ENCODE measurements at regions of chr20 and their contacts with region 1.

Region 1: DNA sequence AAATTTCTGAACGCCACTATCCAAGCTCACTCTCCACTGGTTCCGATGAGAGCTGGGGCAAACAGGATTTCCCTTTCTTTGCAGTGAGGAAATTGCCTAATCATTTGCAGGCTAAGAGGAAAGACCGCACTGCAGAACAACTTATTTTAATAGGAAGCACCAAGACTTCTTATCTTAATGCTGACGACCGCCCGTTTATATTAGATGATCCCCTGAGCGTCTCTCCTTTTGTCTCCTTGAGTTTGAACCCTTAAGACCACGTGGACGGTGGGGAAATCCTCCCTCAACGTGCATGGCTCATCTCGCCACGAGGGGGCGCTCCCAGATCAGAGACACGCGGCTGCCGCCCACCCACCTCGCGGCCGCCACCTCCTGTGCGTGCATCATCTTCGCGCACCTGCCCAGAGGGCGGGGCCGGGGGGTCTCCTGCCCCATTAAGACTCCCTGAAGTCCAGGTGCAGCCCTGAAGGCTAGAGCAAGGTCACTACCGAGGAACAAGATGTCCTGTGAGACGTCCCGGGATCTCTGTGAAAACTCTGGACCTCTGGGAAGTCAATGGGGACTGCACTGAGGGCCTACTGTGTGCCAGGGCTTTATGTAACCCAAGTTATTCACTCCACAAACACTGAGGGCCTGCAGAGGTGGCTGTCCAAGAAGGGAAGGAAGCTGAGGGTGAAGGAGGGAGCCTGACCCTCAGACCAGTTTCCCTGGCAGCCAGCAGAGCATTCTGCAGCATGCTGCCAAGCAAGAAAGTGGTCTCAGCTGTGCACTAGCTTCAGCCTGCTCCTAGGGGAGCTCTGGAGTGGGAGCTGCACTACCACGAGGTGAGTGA is 28.1 kb downstream of the PDYN start:
- DNase-seq: peak; percentile 89
- H3K4me3 Mint-ChIP-seq: peak overlapping the region; percentile 54
- H3K27ac Mint-ChIP-seq: peak overlapping the region; percentile 43
- H3K4me1 Mint-ChIP-seq: peaks cover 14% of the 10 kb centered on the region
- H3K27me3 Mint-ChIP-seq: peaks cover 23% of the 10 kb centered on the region

Region 2: DNA sequence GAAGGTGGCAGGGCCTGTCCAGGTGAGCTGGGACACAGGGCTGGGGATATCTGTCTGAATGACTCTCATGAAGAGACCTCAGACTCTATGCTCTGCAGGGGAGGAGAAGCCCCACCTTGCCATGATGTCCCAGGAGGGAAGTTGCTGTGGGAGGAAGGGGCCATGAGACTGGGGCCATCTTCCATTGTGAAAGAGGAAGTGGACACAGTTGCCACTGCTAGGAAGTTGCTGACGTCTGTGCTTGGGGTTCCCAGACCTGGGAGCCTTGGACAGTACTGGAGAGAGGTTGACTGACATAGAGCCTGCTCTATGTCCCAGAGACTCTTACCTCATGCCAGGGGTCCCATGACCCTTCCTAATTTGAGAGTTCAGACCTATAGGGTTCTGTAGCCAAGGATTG is 370.4 kb before region 1 on chr20:
- CTCF ChIA-PET with region 1: no interaction called
- intact Hi-C with region 1: no loop called
- DNase-seq: no peak
- H3K4me3 Mint-ChIP-seq: no peak overlapping the region
- H3K27ac Mint-ChIP-seq: no peak overlapping the region
- H3K4me1 Mint-ChIP-seq: peaks cover 3% of the 10 kb centered on the region
- H3K27me3 Mint-ChIP-seq: no peaks in the 10 kb centered on the region

Region 3: DNA sequence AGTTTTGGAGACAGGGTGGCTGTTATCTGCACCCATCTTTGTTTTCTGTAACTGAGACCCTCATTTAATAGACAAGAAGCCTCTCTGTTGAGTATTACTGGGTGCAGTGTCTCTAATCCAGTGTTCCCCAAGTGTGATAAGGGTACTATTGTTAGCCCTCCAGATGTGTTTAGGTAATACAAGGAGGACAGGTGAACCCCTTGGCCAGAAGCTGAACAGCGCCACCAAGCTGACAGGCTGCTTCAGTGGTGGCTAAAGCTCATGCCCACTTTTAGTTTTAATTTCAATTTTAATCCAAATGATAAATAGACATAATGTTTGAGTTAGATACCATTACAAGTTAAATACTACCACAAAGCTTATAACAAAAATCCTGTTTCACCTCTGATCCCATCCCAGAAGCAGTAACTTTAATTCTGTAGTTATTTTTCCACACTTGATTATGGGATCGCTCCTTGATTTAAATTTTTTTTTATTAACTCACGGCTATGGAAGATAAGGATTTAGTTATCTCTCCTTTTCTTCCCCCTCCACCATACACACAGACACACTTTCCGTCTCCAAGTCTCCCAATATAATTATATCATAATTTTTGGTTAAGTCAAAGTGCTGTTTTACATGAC is 127.5 kb after region 1 on chr20:
- CTCF ChIA-PET with region 1: no interaction called
- intact Hi-C with region 1: loop called (anchors 1 kb)
- DNase-seq: peak; percentile 65
- H3K4me3 Mint-ChIP-seq: no peak overlapping the region
- H3K27ac Mint-ChIP-seq: no peak overlapping the region
- H3K4me1 Mint-ChIP-seq: no peaks in the 10 kb centered on the region
- H3K27me3 Mint-ChIP-seq: peaks cover 28% of the 10 kb centered on the region

Region 4: GRCh38 chr20:2349818-2350508 is 384.2 kb after region 1 on chr20:
- CTCF ChIA-PET with region 1: no interaction called
- intact Hi-C with region 1: loop called (anchors 2 kb)
- DNase-seq: no peak
- H3K4me3 Mint-ChIP-seq: no peak overlapping the region
- H3K27ac Mint-ChIP-seq: no peak overlapping the region
- H3K4me1 Mint-ChIP-seq: no peaks in the 10 kb centered on the region
- H3K27me3 Mint-ChIP-seq: peaks cover 13% of the 10 kb centered on the region